Endothelial cell of umbilical vein (primary cell): ENCODE measurements at regions of chr12 and their contacts with region 1.

Region 1: GRCh38 chr12:124411281-124411878 is 116.5 kb downstream of the RFLNA start:
- DNase-seq: no peak
- H3K4me3 ChIP-seq: no peak overlapping the region
- H3K27ac ChIP-seq: no peak overlapping the region
- H3K4me1 ChIP-seq: no peaks in the 10 kb centered on the region
- H3K27me3 ChIP-seq: no peaks in the 10 kb centered on the region
- CTCF ChIP-seq: no peak
- POLR2A ChIP-seq: no peak

Region 2: GRCh38 chr12:124399622-124400021 is 11.8 kb before region 1 on chr12:
- CTCF ChIA-PET with region 1: interaction called, 35 read pairs
- POLR2A ChIA-PET with region 1: no interaction called
- dilution Hi-C with region 1: no loop called
- intact Hi-C with region 1: no loop called
- DNase-seq: peak; percentile 49
- H3K4me3 ChIP-seq: no peak overlapping the region
- H3K27ac ChIP-seq: no peak overlapping the region
- H3K4me1 ChIP-seq: peaks cover 8% of the 10 kb centered on the region
- H3K27me3 ChIP-seq: no peaks in the 10 kb centered on the region
- CTCF ChIP-seq: peak; percentile 75 to 76
- POLR2A ChIP-seq: no peak